ENCODE measurements at regions of chr11 and their contacts with region 1.

Region 1: DNA sequence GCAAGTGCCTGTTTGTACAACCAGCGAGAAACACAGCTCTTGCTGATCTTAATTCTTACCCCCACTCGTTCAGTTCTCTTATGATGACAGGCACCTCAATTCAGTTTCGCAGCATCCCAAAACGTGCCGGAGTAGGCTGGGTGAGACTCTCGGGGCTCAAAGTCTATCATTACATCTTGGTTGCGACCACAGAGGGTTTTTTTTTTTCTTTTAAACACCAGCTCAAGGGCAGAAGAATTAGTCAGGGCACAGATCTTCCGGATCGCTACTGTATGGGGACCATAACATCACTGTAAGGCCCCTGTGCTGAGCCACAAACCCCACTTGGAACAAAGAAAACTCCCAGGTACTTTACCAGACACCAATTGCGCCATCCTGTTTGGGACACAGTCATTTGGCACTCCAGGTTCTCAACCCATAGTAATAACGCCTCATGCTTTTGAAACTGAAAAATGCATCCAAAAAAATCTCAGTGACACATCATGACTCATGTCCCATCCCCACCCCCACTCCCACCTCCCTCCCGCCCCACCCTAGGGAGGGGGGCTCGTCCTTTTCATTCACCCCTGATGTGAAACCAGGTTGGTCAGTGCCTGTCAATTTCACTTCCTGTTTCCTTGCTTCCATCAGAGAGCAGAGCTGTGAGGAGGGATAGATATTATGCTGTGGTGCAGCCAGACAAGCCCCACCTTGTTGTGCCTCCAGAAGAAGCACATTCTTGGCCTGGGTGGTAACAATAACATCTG is 41.0 kb upstream of the CD5 start:
- DNase-seq: peak; percentile 97
- ATAC-seq: peak; percentile 90
- H3K4me3 ChIP-seq: peak overlapping the region; percentile 48; the same call in 1 of the 2 replicates
- H3K27ac ChIP-seq: peak overlapping the region; percentile 84
- H3K4me1 ChIP-seq: peaks cover 30% of the 10 kb centered on the region
- H3K27me3 ChIP-seq: no peaks in the 10 kb centered on the region
- CTCF ChIP-seq: no peak
- EP300 ChIP-seq: peak; percentile 91 to 99
- POLR2A ChIP-seq: peak; percentile 43; the same call in 1 of the 2 replicates
- RAD21 ChIP-seq: peak; percentile 27

Region 2: GRCh38 chr11:60951899-60952741 is 109.1 kb before region 1 on chr11 and contains the start of gene SLC15A3:
- CTCF ChIA-PET with region 1: no interaction called
- POLR2A ChIA-PET with region 1: no interaction called
- RAD21 ChIA-PET with region 1: interaction called, 8 read pairs
- SMC1A ChIA-PET with region 1: no interaction called
- in situ Hi-C with region 1: no loop called
- intact Hi-C with region 1: loop called (anchors 1 kb)
- DNase-seq: peak; percentile 61
- ATAC-seq: peak; percentile 88
- H3K4me3 ChIP-seq: peak within 1 kb of the TSS; percentile 94
- H3K27ac ChIP-seq: peak within 1 kb of the TSS; percentile 97
- H3K4me1 ChIP-seq: peaks cover 28% of the 10 kb centered on the region
- H3K27me3 ChIP-seq: no peaks in the 10 kb centered on the region
- CTCF ChIP-seq: no peak
- EP300 ChIP-seq: 0 out of 4 replicates have a peak, but pooled peaks of 1 of the 2 experiments have one; percentile 23
- POLR2A ChIP-seq: peak; percentile 85
- RAD21 ChIP-seq: no peak
- polyA plus RNA-seq, gene SLC15A3: 17.7 to 55.4 TPM

Region 3: DNA sequence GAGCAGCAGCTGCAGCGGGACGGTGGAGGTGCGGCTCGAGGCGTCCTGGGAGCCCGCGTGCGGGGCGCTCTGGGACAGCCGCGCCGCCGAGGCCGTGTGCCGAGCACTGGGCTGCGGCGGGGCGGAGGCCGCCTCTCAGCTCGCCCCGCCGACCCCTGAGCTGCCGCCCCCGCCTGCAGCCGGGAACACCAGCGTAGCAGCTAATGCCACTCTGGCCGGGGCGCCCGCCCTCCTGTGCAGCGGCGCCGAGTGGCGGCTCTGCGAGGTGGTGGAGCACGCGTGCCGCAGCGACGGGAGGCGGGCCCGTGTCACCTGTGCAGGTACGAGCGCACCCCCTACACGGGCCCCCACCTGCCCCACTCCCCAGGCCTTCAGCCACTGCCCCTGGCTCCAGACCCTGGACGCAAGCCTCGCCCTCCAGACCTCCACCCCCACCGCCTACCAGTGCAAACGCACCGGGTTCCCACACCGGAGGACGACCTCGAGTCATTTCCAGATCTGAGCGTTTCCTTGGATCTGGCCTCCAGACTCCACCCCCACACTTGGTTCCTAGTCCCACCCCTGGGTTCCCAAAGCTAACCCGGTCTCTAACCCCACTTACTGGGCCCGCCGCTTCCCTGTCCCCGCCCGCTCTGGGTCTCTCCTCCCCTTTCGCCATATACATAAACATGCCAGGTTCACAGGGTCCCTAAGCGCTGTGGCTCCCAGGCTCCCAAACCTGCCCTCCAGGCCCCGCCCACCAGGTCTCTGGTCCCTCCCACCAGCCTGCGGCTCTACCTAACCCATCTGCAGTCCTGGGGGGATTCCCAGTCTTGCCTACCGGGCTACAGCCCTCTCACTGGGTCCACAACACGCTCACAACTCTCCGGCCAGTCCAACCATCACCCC is 53.4 kb before region 1 on chr11:
- CTCF ChIA-PET with region 1: no interaction called
- POLR2A ChIA-PET with region 1: no interaction called
- RAD21 ChIA-PET with region 1: no interaction called
- SMC1A ChIA-PET with region 1: no interaction called
- in situ Hi-C with region 1: no loop called
- intact Hi-C with region 1: no loop called
- DNase-seq: no peak
- ATAC-seq: peak; percentile 59
- H3K4me3 ChIP-seq: 0 out of 2 replicates have a peak overlapping the region, but pooled peaks have one; percentile 36
- H3K27ac ChIP-seq: no peak overlapping the region
- H3K4me1 ChIP-seq: peaks cover 21% of the 10 kb centered on the region
- H3K27me3 ChIP-seq: no peaks in the 10 kb centered on the region
- CTCF ChIP-seq: no peak
- EP300 ChIP-seq: no peak
- POLR2A ChIP-seq: no peak
- RAD21 ChIP-seq: no peak

Region 4: DNA sequence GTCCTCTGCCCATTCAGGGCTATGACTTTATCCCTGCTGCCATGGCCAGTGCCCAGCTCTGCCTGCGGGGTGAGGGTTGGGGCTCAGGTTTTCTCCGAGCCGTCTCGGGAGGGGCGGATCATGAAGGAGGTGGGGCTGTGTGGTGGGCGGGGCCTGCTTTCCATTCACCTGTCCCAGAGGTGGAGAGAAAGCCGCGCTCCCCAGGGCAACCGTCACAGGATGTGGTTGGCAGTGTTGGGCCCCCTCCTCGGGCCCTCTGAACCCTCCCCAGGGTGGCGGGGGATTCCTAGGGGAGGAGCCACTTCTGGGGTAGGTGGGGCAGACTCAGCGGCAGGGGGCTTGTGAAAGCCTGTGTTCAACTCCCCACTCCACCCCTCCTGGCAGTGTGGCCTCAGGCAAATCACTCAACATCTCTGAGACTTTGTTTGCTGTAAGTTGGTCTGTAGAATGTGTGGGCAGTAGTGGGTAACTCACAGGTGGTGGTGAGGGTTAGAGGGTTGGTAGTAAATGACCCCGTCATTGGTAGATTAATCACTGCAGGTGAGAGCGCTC is 39.5 kb before region 1 on chr11:
- CTCF ChIA-PET with region 1: no interaction called
- POLR2A ChIA-PET with region 1: no interaction called
- RAD21 ChIA-PET with region 1: interaction called, 10 read pairs
- SMC1A ChIA-PET with region 1: interaction called, 15 read pairs
- in situ Hi-C with region 1: no loop called
- intact Hi-C with region 1: no loop called
- DNase-seq: no peak
- ATAC-seq: peak; percentile 70
- H3K4me3 ChIP-seq: no peak overlapping the region
- H3K27ac ChIP-seq: no peak overlapping the region
- H3K4me1 ChIP-seq: peaks cover 22% of the 10 kb centered on the region
- H3K27me3 ChIP-seq: no peaks in the 10 kb centered on the region
- CTCF ChIP-seq: no peak
- EP300 ChIP-seq: no peak
- POLR2A ChIP-seq: no peak
- RAD21 ChIP-seq: no peak

Region 5: GRCh38 chr11:61049859-61050258 is 11.4 kb before region 1 on chr11:
- CTCF ChIA-PET with region 1: interaction called, 25 read pairs
- POLR2A ChIA-PET with region 1: interaction called, 8 read pairs
- RAD21 ChIA-PET with region 1: interaction called, 65 read pairs
- SMC1A ChIA-PET with region 1: interaction called, 98 read pairs
- in situ Hi-C with region 1: no loop called
- intact Hi-C with region 1: no loop called
- DNase-seq: no peak
- ATAC-seq: no peak
- H3K4me3 ChIP-seq: no peak overlapping the region
- H3K27ac ChIP-seq: no peak overlapping the region
- H3K4me1 ChIP-seq: no peaks in the 10 kb centered on the region
- H3K27me3 ChIP-seq: no peaks in the 10 kb centered on the region
- CTCF ChIP-seq: no peak
- EP300 ChIP-seq: no peak
- POLR2A ChIP-seq: no peak
- RAD21 ChIP-seq: no peak

Region 6: DNA sequence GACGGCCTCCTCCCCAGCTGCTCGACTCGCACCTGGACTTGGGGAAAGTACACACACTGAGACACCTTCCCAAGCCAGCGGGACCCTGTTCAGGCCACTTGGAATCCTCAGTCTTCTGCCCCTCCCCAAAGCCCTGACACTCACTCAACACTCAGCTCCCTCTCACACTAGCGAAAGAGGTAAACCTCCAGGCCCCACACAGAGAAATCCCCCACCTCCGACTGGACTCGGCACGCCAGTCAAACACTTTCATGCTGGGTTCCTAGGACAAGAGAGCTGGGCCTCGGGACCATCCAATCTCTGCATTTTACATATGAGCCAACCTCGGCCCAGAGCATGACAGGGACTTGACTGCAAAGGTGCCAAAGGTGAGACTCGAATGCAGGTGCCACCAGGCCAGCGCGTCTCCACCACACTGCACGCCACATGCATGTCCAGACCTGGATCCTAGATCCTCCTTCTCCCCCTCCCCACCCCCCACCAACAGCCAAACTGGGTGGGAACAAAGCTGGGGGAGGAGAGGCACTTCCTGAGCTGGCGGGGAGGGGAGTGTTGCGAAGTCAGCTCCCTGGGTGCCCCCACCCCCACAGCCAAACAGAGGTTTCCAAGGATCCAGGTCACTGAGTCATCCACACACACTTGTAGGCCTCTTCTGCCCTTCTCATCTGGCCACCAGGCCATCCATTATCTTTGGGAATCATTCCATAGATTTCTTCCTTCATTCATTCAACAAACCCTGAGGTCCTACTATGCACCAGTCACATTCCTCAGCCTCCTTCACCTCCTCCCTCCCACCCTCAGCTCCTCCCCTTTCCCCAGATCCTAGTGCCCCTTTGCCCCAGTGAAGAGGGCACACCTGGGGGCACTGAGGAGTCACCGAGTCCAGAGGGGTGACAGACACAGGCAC is 30.4 kb after region 1 on chr11:
- CTCF ChIA-PET with region 1: interaction called, 3 read pairs
- POLR2A ChIA-PET with region 1: interaction called, 4 read pairs
- RAD21 ChIA-PET with region 1: interaction called, 12 read pairs
- SMC1A ChIA-PET with region 1: interaction called, 25 read pairs
- in situ Hi-C with region 1: no loop called
- intact Hi-C with region 1: no loop called
- DNase-seq: no peak
- ATAC-seq: peak; percentile 65
- H3K4me3 ChIP-seq: peak overlapping the region; percentile 64
- H3K27ac ChIP-seq: peak overlapping the region; percentile 69
- H3K4me1 ChIP-seq: peaks cover 34% of the 10 kb centered on the region
- H3K27me3 ChIP-seq: no peaks in the 10 kb centered on the region
- CTCF ChIP-seq: no peak
- EP300 ChIP-seq: no peak
- POLR2A ChIP-seq: no peak
- RAD21 ChIP-seq: no peak

Region 7: DNA sequence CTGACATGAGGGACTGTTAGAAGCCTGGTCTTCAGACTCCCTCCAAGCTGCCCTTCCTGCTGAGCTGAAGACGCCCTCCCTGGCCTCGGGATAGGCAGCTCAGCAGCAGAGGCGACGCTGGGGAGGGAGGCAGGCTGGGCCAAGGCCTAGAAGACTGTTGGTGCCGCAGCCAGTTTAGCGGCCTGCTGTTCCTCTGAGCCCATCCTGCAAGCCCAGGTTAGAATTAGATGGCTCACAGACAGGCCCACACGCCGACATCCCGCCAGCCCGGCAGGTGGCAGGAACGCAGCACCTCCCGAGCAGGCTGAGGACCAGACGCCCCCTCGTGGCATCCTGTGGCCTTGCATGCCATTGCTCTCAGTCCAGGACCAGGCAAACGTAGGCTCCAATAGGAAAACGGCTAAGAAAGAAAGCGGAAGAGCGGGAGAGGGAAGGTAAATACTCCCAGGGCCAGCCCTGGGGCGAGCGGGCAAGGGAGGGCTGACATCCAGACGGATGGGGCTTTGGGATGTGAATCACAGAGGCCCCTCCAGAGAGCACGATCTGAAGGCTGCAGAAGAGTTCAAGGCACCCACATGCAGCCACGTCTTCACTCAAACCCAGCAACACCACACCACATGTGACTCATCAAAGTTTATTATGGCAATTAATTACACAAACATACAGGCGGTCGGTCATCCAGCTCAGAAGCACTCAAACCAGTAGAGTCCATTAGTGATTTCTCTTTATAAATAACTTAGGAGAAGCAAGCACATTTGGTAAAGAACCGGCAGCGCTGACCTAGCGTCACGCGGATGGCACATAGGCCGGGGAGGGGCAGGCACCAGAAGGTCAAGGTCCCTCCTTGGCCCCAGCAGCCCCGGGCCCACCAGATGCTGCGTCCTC is 68.6 kb after region 1 on chr11:
- CTCF ChIA-PET with region 1: interaction called, 6 read pairs
- POLR2A ChIA-PET with region 1: no interaction called
- RAD21 ChIA-PET with region 1: interaction called, 8 read pairs
- SMC1A ChIA-PET with region 1: interaction called, 11 read pairs
- in situ Hi-C with region 1: no loop called
- intact Hi-C with region 1: loop called (anchors 1 kb)
- DNase-seq: peak; percentile 44
- ATAC-seq: peak; percentile 97
- H3K4me3 ChIP-seq: no peak overlapping the region
- H3K27ac ChIP-seq: peak overlapping the region; percentile 52; the same call in 1 of the 2 replicates
- H3K4me1 ChIP-seq: peaks cover 7% of the 10 kb centered on the region
- H3K27me3 ChIP-seq: no peaks in the 10 kb centered on the region
- CTCF ChIP-seq: peak; percentile 100
- EP300 ChIP-seq: no peak
- POLR2A ChIP-seq: no peak; the same call in 1 of the 2 replicates
- RAD21 ChIP-seq: peak; percentile 100

Measured in GM12878 (cell line).